ENCODE measurements at regions of chr12 and their contacts with region 1.

Region 1: GRCh38 chr12:28253161-28253641 is 62.9 kb downstream of the CCDC91 start:
- DNase-seq: peak; percentile 76
- H3K4me3 Mint-ChIP-seq: peak overlapping the region; percentile 74
- H3K27ac Mint-ChIP-seq: peak overlapping the region; percentile 97
- H3K4me1 Mint-ChIP-seq: peaks cover 42% of the 10 kb centered on the region
- H3K27me3 Mint-ChIP-seq: no peaks in the 10 kb centered on the region

Region 2: DNA sequence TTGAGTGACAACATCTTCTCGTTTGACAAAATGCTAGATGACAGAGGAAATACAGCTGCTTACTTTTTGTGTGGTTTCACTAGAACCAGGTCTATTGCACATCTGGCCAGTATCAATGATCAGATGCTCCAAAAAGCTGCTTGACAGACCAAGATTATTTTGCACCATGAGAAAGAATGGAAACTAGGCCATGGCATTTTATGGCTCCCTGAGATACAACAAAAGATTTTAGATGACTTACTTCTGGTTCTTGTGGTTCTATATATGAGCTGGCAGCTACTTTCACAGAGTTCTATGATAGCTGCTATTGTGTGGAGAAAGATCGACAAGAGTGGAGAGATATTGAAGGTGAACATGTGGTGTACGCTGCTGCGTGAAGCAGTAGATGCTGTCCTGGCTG is 755.1 kb before region 1 on chr12:
- intact Hi-C with region 1: loop called (anchors 10 kb)
- DNase-seq: peak; percentile 70
- H3K4me3 Mint-ChIP-seq: peak overlapping the region; percentile 34
- H3K27ac Mint-ChIP-seq: peak overlapping the region; percentile 47
- H3K4me1 Mint-ChIP-seq: peaks cover 46% of the 10 kb centered on the region
- H3K27me3 Mint-ChIP-seq: peaks cover 25% of the 10 kb centered on the region

Region 3: GRCh38 chr12:28065889-28066630 is 187.1 kb before region 1 on chr12:
- intact Hi-C with region 1: loop called (anchors 1 kb)
- DNase-seq: no peak
- H3K4me3 Mint-ChIP-seq: no peak overlapping the region
- H3K27ac Mint-ChIP-seq: no peak overlapping the region
- H3K4me1 Mint-ChIP-seq: peaks cover 7% of the 10 kb centered on the region
- H3K27me3 Mint-ChIP-seq: no peaks in the 10 kb centered on the region

Region 4: GRCh38 chr12:28190321-28191050 is 62.7 kb before region 1 on chr12 and contains the start of gene CCDC91:
- intact Hi-C with region 1: loop called (anchors 1 kb)
- DNase-seq: peak; percentile 95
- H3K4me3 Mint-ChIP-seq: peak within 1 kb of the TSS; percentile 95
- H3K27ac Mint-ChIP-seq: peak within 1 kb of the TSS; percentile 99
- H3K4me1 Mint-ChIP-seq: peaks cover 32% of the 10 kb centered on the region
- H3K27me3 Mint-ChIP-seq: no peaks in the 10 kb centered on the region
- total RNA-seq, gene CCDC91: 12.0 and 15.4 TPM in 2 replicates

Region 5: DNA sequence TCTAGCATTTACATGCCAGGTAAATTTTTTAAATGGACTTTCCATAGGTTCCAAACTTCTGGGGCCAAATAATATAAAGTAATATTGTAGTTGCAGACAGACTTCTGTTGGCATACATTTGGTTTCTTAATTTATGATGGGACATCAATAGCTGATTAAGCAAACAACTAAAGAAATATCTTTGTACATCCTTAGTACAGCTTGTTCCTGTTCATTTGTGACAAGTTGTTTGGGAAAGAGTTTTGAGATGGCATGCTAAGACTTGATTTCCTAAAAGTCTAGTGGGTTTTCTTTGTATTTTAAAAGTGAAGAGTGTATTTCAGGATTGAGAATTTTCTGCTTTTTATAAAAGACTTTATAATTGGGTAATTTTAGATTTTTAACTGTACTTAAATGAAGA is 22.0 kb before region 1 on chr12:
- intact Hi-C with region 1: loop called (anchors 2 kb)
- DNase-seq: no peak
- H3K4me3 Mint-ChIP-seq: no peak overlapping the region
- H3K27ac Mint-ChIP-seq: no peak overlapping the region
- H3K4me1 Mint-ChIP-seq: peaks cover 4% of the 10 kb centered on the region
- H3K27me3 Mint-ChIP-seq: peaks cover 3% of the 10 kb centered on the region

Region 6: GRCh38 chr12:28497889-28498411 is 244.7 kb after region 1 on chr12:
- intact Hi-C with region 1: loop called (anchors 1 kb)
- DNase-seq: no peak
- H3K4me3 Mint-ChIP-seq: no peak overlapping the region
- H3K27ac Mint-ChIP-seq: peak overlapping the region; percentile 7
- H3K4me1 Mint-ChIP-seq: peaks cover 9% of the 10 kb centered on the region
- H3K27me3 Mint-ChIP-seq: no peaks in the 10 kb centered on the region